Caco-2 (cell line): ENCODE measurements at regions of chrX and their contacts with region 1.

Region 1: DNA sequence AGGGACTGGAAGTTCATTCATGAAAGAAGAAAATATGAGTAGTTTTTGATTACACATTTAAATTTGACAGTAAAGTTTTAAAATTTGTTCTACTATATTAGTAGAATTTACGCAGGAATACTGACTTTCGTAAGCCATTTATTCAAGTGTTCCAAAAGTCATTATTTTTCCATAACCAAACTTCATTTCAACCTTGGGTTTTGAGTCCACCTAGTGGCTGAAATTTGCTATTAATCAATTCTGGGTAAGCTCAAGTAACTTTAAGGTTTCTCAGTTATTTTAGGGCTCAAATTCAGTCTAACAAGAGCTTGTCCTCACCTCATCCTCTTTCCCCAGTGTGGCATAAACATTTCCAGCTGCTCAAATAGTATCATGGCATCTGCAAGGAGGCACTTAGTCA is 175.4 kb downstream of the SH3BGRL start:
- DNase-seq: peak in 1 of 2 experiments; percentile 1
- H3K4me3 ChIP-seq: no peak overlapping the region
- H3K4me3 Mint-ChIP-seq: no peak overlapping the region
- H3K27ac Mint-ChIP-seq: no peak overlapping the region
- H3K4me1 ChIP-seq: no peaks in the 10 kb centered on the region
- H3K4me1 Mint-ChIP-seq: no peaks in the 10 kb centered on the region
- H3K27me3 ChIP-seq: no peaks in the 10 kb centered on the region
- H3K27me3 Mint-ChIP-seq: peaks cover 3% of the 10 kb centered on the region
- CTCF ChIP-seq: peak; percentile 35 to 37

Region 2: DNA sequence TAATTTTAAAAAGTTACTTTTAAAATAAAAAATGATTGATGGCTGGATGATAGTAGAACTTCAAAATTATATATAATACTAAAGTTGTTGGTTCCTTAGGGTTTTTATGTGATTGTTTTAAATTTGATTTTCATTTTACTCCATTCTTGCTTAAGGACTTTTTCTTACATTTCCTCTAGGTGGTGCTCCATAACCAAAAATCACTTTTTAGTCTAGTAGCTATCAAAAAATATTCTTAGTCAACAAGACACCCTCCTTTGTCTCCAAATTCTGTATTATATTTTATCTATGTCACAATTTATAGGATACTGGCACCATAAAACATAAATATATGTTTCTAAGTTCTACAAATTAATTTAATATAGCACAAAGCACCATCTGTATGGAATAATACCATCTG is 500.5 kb before region 1 on chrX:
- CTCF ChIA-PET with region 1: interaction called, 3 read pairs
- POLR2A ChIA-PET with region 1: no interaction called
- intact Hi-C with region 1: loop called (anchors 1 kb)
- DNase-seq: peak in 1 of 2 experiments; percentile 6
- H3K4me3 ChIP-seq: no peak overlapping the region
- H3K4me3 Mint-ChIP-seq: no peak overlapping the region
- H3K27ac Mint-ChIP-seq: no peak overlapping the region
- H3K4me1 ChIP-seq: no peaks in the 10 kb centered on the region
- H3K4me1 Mint-ChIP-seq: no peaks in the 10 kb centered on the region
- H3K27me3 ChIP-seq: no peaks in the 10 kb centered on the region
- H3K27me3 Mint-ChIP-seq: peaks cover 5% of the 10 kb centered on the region
- CTCF ChIP-seq: peak in 1 of 2 experiments; percentile 19

Region 3: DNA sequence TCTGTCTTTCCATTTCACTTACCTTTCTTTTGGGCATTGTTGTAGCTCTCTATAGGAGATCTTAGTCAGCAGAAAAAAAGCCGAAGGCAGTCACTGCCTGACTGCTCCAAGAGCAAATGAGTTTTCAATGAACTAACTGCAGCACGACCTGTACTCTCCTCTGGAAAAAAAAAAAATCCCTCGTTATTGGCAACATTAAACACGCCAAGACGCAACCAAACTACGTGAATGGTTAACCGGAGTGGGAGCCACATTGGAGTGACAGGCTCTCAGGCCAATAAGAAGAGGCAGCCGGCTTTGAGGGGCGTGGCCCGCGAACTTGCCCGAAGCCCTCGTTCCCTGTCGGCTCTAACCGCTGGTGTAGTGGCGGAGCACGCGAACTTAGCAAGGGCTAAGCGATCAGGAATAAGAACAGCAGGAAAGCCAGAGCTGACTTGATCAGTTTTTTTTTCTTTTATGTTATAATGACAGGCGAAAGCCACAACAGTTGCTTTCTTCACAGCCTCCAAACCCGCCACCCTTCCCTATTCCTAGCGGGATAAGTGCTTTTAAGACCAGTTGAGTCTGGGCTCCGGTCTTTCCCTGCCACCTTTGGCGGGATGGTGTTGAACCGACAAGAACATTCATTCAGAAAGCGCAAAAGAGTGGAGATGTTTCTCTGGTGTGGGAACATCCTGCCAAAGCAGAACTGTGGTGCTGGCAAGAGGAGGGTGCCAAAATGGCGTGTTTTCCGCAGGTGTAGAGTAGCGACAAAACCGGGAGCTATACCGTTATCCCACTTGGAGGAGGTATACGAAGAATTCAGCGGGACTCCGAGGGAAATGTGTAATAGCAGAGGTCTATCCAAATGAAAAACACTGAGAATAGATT is 255.6 kb before region 1 on chrX:
- CTCF ChIA-PET with region 1: no interaction called
- POLR2A ChIA-PET with region 1: no interaction called
- intact Hi-C with region 1: loop called (anchors 1 kb)
- DNase-seq: peak; percentile 88 to 89
- H3K4me3 ChIP-seq: peak overlapping the region; percentile 49
- H3K4me3 Mint-ChIP-seq: peak overlapping the region; percentile 85
- H3K27ac Mint-ChIP-seq: no peak overlapping the region
- H3K4me1 ChIP-seq: no peaks in the 10 kb centered on the region
- H3K4me1 Mint-ChIP-seq: no peaks in the 10 kb centered on the region
- H3K27me3 ChIP-seq: no peaks in the 10 kb centered on the region
- H3K27me3 Mint-ChIP-seq: peaks cover 4% of the 10 kb centered on the region
- CTCF ChIP-seq: no peak

Region 4: DNA sequence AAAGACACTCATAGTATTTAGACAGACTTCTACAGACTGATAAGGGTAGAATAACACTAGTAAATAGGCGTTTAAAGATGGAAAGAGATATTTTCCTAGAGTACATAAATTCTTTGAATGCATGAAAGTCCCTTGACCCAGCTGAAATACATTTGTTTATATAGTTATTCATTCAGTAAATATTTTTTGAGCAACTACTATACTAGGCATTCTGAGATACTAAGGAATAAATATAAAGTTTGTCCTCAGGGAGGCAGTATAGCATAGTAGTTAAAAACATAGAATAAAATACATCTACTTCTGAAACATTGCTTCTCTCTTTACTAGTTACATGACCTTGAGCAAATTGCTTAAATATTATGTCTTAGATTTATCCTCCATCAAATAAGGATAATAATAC is 203.0 kb before region 1 on chrX:
- CTCF ChIA-PET with region 1: no interaction called
- POLR2A ChIA-PET with region 1: no interaction called
- intact Hi-C with region 1: loop called (anchors 1 kb)
- DNase-seq: no peak
- H3K4me3 ChIP-seq: no peak overlapping the region
- H3K4me3 Mint-ChIP-seq: no peak overlapping the region
- H3K27ac Mint-ChIP-seq: no peak overlapping the region
- H3K4me1 ChIP-seq: no peaks in the 10 kb centered on the region
- H3K4me1 Mint-ChIP-seq: no peaks in the 10 kb centered on the region
- H3K27me3 ChIP-seq: no peaks in the 10 kb centered on the region
- H3K27me3 Mint-ChIP-seq: no peaks in the 10 kb centered on the region
- CTCF ChIP-seq: no peak